ENCODE measurements at regions of chr7 and their contacts with region 1.

Region 1: DNA sequence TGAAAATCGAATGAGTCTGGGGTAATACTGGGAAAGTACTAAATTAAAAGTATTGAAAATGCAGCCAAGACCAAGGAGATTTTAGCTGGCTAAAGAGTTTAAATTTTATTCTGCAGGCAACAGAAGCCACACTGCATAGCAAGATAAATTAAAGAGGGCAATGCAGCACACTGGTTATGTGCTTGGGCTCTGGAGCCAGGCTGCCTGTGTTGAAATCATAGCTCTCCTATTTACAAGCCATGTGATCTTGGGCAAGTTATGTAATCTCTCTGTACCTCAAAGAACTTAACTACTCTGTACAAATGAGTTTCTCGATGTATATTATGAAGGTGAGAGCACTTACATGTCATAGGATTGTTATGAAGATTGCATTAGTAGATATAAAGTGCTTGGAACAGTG is 9.9 kb downstream of the SLC25A13 start:
- DNase-seq: no peak
- ATAC-seq: peak; percentile 76
- H3K4me3 ChIP-seq: no peak overlapping the region
- H3K27ac ChIP-seq: no peak overlapping the region
- H3K4me1 ChIP-seq: peaks cover 0 to 5% of the 10 kb centered on the region in 2 donors
- H3K27me3 ChIP-seq: no peaks in the 10 kb centered on the region

Region 2: GRCh38 chr7:96199421-96199820 is 112.5 kb before region 1 on chr7:
- intact Hi-C with region 1: loop called in 1 of 2 experiments (anchors 10 kb)
- DNase-seq: no peak
- ATAC-seq: peak; percentile 57
- H3K4me3 ChIP-seq: no peak overlapping the region
- H3K27ac ChIP-seq: no peak overlapping the region
- H3K4me1 ChIP-seq: peaks cover 0 to 2% of the 10 kb centered on the region in 2 donors
- H3K27me3 ChIP-seq: no peaks in the 10 kb centered on the region

Measured in aorta (tissue), 5 donors.